ENCODE measurements at regions of chr19 and their contacts with region 1.

Region 1: GRCh38 chr19:4909897-4910593 is 744 bp downstream of the UHRF1 start:
- DNase-seq: peak; percentile 95
- H3K4me3 Mint-ChIP-seq: peak overlapping the region; percentile 65
- H3K27ac Mint-ChIP-seq: peak overlapping the region; percentile 85
- H3K4me1 Mint-ChIP-seq: peaks cover 25% of the 10 kb centered on the region
- H3K27me3 Mint-ChIP-seq: no peaks in the 10 kb centered on the region
- CTCF ChIP-seq: no peak

Region 2: DNA sequence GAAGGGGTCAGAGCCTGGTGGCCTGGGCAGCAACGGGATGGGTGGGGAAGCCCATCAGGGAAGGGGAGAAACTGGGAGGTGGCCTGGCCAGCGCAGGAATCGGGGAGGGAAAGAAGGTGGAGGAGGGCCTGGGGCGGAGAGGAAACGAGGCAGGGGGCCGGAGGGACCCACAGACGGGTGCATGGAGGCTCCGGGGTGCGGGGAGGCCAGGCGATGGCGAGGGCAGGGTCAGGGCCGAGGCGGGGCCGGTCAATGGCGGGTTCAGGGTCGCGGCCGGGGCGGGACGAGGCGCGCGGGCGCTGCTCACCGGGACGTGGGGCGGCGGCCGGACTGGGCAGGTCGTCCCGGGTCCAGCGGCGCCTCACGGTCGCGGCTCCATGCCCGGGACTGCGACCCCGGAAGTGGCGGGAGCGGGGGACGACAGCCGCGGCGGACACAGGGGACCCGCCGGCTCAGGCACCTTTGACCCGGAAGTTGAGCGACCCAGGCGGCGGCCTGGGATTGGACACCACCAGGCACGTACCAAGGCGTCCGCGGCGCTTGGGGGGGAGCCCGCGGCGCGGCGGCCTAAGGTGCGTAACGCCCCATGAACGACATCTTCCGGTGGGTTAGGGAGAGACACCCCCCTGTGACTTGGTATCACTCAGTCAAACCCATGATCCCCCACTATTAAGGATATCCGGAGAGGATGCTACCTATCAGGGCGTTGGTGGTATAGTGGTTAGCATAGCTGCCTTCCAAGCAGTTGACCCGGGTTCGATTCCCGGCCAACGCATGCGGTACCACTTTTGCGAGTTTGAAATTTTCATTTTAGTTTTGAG is 186.5 kb before region 1 on chr19 and contains the start of gene DPP9:
- CTCF ChIA-PET with region 1: interaction called, 3 read pairs
- POLR2A ChIA-PET with region 1: interaction called, 9 read pairs
- intact Hi-C with region 1: loop called (anchors 10 kb)
- DNase-seq: peak; percentile 99
- H3K4me3 Mint-ChIP-seq: peak within 1 kb of the TSS; percentile 93
- H3K27ac Mint-ChIP-seq: peak within 1 kb of the TSS; percentile 73
- H3K4me1 Mint-ChIP-seq: peaks cover 20% of the 10 kb centered on the region
- H3K27me3 Mint-ChIP-seq: no peaks in the 10 kb centered on the region
- CTCF ChIP-seq: no peak
- total RNA-seq, gene DPP9: 90.6 and 100 TPM in 2 replicates

Region 3: GRCh38 chr19:4831304-4831978 is 78.6 kb before region 1 on chr19 and contains the start of gene TICAM1:
- CTCF ChIA-PET with region 1: no interaction called
- POLR2A ChIA-PET with region 1: interaction called, 12 read pairs
- intact Hi-C with region 1: no loop called
- DNase-seq: peak; percentile 71
- H3K4me3 Mint-ChIP-seq: peak within 1 kb of the TSS; percentile 81
- H3K27ac Mint-ChIP-seq: peak within 1 kb of the TSS; percentile 94
- H3K4me1 Mint-ChIP-seq: peaks cover 9% of the 10 kb centered on the region
- H3K27me3 Mint-ChIP-seq: no peaks in the 10 kb centered on the region
- CTCF ChIP-seq: no peak
- total RNA-seq, gene TICAM1: 24.2 and 25.6 TPM in 2 replicates

Region 4: DNA sequence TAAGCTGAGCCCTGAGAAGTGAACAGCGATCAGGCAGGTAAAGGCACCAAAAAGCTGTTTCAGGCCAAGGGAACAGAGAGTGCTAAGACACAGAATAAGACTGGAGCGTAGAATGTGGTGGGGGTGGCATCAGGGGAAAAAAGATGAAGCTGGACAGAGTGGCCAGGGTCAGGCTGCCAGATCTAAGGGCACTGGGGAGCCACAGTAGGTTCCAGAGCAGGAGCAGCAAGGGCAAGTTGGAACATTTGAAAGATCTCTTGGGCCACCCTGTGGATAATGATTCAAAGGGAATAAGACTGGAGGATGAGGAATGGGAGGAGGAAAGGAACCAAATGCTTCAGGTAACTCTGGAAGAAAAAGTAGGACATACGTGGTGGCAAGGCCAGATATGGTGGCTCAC is 36.1 kb before region 1 on chr19:
- CTCF ChIA-PET with region 1: interaction called, 93 read pairs
- POLR2A ChIA-PET with region 1: interaction called, 98 read pairs
- intact Hi-C with region 1: loop called (anchors 1 kb)
- DNase-seq: no peak
- H3K4me3 Mint-ChIP-seq: no peak overlapping the region
- H3K27ac Mint-ChIP-seq: no peak overlapping the region
- H3K4me1 Mint-ChIP-seq: peaks cover 10% of the 10 kb centered on the region
- H3K27me3 Mint-ChIP-seq: no peaks in the 10 kb centered on the region
- CTCF ChIP-seq: no peak

Region 5: GRCh38 chr19:5031231-5032100 is 121.4 kb after region 1 on chr19:
- CTCF ChIA-PET with region 1: interaction called, 29 read pairs
- POLR2A ChIA-PET with region 1: interaction called, 14 read pairs
- intact Hi-C with region 1: loop called (anchors 1 kb)
- DNase-seq: peak; percentile 82
- H3K4me3 Mint-ChIP-seq: no peak overlapping the region
- H3K27ac Mint-ChIP-seq: no peak overlapping the region
- H3K4me1 Mint-ChIP-seq: no peaks in the 10 kb centered on the region
- H3K27me3 Mint-ChIP-seq: no peaks in the 10 kb centered on the region
- CTCF ChIP-seq: peak; percentile 95